ENCODE measurements at regions of chr10 and their contacts with region 1.

Region 1: DNA sequence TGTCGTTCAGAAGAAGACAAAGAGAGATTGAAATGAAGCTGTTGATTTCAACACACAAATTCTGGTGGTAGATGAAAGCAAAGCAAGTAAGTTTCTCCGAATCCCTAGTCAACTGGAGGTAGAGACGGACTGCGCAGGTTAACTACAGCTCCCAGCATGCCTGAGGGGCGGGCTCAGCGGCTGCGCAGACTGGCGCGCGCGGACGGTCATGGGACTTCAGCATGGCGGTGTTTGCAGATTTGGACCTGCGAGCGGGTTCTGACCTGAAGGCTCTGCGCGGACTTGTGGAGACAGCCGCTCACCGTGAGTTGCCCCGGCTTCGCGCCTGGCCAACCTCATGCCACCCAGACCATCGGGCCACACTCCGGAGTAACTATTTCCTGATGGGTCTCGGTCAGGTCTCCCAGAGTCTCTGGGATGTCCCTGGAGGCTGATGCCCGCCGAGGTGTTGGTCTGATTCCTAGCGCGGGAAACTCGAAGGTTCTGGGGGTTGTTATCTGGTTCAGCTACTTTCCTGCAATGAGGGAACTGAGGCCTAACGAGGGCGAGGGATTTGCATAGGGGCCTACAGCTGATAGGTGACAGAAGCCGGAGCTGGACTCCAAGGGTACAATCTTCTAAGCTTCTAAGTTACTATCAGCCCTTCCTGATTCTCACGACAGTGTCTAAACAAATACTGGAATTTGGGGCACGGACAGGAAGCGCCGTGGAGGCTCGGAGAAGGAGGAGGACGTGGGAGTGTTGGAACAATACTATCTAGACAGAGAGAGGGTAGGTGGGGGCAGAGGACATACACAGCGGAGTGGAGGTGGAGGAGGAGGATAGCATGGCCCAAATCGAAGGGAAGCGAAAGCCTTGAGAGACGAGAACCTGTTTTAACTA is at the start of gene RPP30:
- DNase-seq: peak; percentile 96
- H3K4me3 Mint-ChIP-seq: peak within 1 kb of the TSS; percentile 97
- H3K27ac Mint-ChIP-seq: peak within 1 kb of the TSS; percentile 96
- H3K4me1 Mint-ChIP-seq: peaks cover 32% of the 10 kb centered on the region
- H3K27me3 Mint-ChIP-seq: peaks cover 25% of the 10 kb centered on the region
- total RNA-seq, gene RPP30: 86.4 and 86.9 TPM in 2 replicates

Region 2: DNA sequence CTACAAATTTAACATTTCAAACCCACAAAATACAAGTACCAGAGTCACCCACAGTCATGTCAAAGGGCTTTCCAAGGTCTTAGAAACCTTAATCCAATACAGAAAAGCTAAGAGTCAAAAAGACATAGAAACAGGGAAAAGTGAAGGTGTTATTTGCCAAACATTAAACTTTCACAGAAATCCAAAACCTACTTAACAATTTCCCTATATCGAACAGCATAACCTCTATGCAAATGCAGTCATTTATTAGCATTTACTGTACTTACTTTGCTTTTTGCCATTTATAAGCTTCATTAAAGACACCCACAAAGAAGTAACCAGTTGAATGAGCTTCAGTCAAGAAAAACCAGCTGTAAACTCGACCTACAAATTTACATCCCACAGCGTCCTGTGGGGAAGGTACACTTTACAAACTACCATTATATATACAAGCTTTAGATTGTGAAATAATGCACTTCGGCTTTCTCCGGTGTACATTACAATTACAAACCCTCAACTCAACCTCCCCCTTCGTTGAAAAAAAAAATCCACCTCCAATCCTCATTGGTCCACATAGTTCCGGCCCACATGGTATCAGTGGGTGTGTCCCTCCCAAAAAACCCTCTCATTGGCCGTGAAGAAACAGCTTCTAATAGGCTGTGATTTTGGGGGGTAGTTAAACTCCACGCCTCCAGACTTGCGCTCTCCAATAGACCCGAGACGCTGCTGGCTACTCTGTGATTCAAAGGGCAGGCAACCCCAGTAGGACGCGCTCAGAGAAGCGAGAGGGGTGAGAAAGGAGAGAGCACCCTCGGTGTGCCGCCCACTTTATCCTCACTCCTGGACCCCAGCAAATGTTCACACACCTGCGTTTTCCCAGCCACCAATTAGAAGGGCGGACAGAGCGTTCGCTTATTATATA is 1228.3 kb before region 1 on chr10:
- intact Hi-C with region 1: loop called (anchors 5 kb)
- DNase-seq: peak; percentile 93
- H3K4me3 Mint-ChIP-seq: no peak overlapping the region
- H3K27ac Mint-ChIP-seq: no peak overlapping the region
- H3K4me1 Mint-ChIP-seq: peaks cover 10% of the 10 kb centered on the region
- H3K27me3 Mint-ChIP-seq: peaks cover 17% of the 10 kb centered on the region

Region 3: GRCh38 chr10:89793649-89794254 is 1078.3 kb before region 1 on chr10:
- intact Hi-C with region 1: loop called (anchors 1 kb)
- DNase-seq: peak; percentile 83
- H3K4me3 Mint-ChIP-seq: no peak overlapping the region
- H3K27ac Mint-ChIP-seq: no peak overlapping the region
- H3K4me1 Mint-ChIP-seq: peaks cover 7% of the 10 kb centered on the region
- H3K27me3 Mint-ChIP-seq: peaks cover 3% of the 10 kb centered on the region

Region 4: GRCh38 chr10:90227217-90227656 is 644.8 kb before region 1 on chr10:
- intact Hi-C with region 1: no loop called
- DNase-seq: peak; percentile 66
- H3K4me3 Mint-ChIP-seq: no peak overlapping the region
- H3K27ac Mint-ChIP-seq: peak overlapping the region; percentile 46
- H3K4me1 Mint-ChIP-seq: peaks cover 8% of the 10 kb centered on the region
- H3K27me3 Mint-ChIP-seq: peaks cover 5% of the 10 kb centered on the region

Region 5: DNA sequence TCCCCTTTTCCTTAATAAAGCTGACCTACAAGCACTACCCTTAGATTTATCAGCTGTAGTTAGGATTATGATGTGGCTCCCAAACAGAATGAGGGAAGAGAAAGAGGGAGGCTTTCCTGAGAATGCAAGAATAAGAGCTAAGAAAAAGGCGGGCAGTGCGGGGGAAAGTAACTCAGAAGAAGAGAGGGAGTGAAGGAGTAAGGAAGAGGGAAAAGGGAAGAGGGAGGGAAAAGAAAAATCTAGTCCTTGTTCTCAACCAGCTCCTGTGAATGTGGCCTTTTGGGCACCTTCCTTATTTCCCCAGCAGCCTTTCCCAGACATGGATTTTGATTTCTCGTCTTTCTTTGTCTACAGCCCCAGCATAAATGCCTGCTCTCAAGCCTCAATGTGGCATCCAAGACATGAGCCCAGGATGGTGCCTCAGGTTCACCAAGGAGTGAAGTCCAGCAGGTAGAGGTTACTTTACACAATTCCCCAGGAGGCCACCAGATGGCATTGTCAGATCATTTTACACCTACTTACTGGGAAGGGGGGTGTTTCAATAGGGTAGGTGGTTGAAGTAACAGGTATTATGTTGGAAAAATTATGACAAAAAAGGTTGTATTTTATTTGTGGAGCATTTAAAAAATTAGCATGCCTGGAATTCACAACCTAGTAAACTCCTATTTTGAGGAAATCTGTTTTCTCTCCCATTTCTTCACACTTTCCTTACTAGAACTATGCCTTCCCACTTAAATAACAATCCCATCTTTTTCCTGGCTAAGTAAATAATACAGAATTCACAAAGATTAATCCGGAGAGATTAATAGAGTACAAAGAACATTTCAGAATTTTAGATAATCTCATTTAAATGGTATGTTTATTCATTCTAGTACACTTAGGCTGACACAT is 120.7 kb before region 1 on chr10:
- intact Hi-C with region 1: loop called (anchors 2 kb)
- DNase-seq: peak; percentile 79
- H3K4me3 Mint-ChIP-seq: no peak overlapping the region
- H3K27ac Mint-ChIP-seq: no peak overlapping the region
- H3K4me1 Mint-ChIP-seq: no peaks in the 10 kb centered on the region
- H3K27me3 Mint-ChIP-seq: peaks cover 32% of the 10 kb centered on the region

Region 6: DNA sequence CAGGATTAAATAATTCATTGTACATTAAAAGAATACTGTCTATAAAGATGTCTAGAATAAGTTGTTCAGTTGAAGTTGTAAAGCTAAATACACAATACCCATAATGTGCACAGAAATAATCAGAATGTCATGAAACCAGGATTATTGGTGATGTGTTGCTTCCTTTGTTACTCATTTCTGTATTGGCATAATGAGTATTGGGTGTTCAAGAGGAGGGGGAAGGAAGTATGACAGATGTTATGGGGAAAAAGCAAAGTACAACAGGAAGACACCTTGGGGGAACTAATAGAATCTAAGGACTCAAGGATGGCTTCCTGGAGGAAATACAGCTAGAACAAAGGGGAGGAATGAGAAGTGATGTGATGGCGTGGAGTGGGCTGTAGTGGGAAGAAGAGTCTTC is 33.9 kb after region 1 on chr10:
- intact Hi-C with region 1: loop called (anchors 1 kb)
- DNase-seq: no peak
- H3K4me3 Mint-ChIP-seq: no peak overlapping the region
- H3K27ac Mint-ChIP-seq: peak overlapping the region; percentile 68
- H3K4me1 Mint-ChIP-seq: peaks cover 9% of the 10 kb centered on the region
- H3K27me3 Mint-ChIP-seq: no peaks in the 10 kb centered on the region

Measured in activated CD4-positive, alpha-beta T cell treated with anti-CD3 and anti-CD28 coated beads, Interleukin-2, amount 10 ng/mL, durations not matched to agents 24 days and 14 days (primary cell).